Aorta (tissue), 5 donors: ENCODE measurements at regions of chr2 and their contacts with region 1.

Region 1: GRCh38 chr2:234823877-234824376 is 127.9 kb upstream of the SH3BP4 start:
- DNase-seq: peak in 1 of 2 donors; percentile 74
- ATAC-seq: peak; percentile 88
- H3K4me3 ChIP-seq: no peak overlapping the region
- H3K27ac ChIP-seq: peak overlapping the region in 1 of 2 donors; percentile 47
- H3K4me1 ChIP-seq: no peaks in the 10 kb centered on the region
- H3K27me3 ChIP-seq: no peaks in the 10 kb centered on the region

Region 2: GRCh38 chr2:234679741-234680687 is 143.9 kb before region 1 on chr2:
- intact Hi-C with region 1: loop called in 1 of 2 experiments (anchors 5 kb)
- DNase-seq: peak; percentile 88 to 89
- ATAC-seq: peak; percentile 91
- H3K4me3 ChIP-seq: peak overlapping the region in 1 of 2 donors; percentile 14
- H3K27ac ChIP-seq: peak overlapping the region in 1 of 2 donors; percentile 67
- H3K4me1 ChIP-seq: peaks cover 3 to 4% of the 10 kb centered on the region in 2 donors
- H3K27me3 ChIP-seq: no peaks in the 10 kb centered on the region

Region 3: GRCh38 chr2:234905547-234906265 is 81.8 kb after region 1 on chr2:
- intact Hi-C with region 1: no loop called
- DNase-seq: no peak
- ATAC-seq: no peak
- H3K4me3 ChIP-seq: no peak overlapping the region
- H3K27ac ChIP-seq: no peak overlapping the region
- H3K4me1 ChIP-seq: no peaks in the 10 kb centered on the region
- H3K27me3 ChIP-seq: no peaks in the 10 kb centered on the region